GM10248 (cell line): ENCODE measurements at regions of chr17 and their contacts with region 1.

Region 1: DNA sequence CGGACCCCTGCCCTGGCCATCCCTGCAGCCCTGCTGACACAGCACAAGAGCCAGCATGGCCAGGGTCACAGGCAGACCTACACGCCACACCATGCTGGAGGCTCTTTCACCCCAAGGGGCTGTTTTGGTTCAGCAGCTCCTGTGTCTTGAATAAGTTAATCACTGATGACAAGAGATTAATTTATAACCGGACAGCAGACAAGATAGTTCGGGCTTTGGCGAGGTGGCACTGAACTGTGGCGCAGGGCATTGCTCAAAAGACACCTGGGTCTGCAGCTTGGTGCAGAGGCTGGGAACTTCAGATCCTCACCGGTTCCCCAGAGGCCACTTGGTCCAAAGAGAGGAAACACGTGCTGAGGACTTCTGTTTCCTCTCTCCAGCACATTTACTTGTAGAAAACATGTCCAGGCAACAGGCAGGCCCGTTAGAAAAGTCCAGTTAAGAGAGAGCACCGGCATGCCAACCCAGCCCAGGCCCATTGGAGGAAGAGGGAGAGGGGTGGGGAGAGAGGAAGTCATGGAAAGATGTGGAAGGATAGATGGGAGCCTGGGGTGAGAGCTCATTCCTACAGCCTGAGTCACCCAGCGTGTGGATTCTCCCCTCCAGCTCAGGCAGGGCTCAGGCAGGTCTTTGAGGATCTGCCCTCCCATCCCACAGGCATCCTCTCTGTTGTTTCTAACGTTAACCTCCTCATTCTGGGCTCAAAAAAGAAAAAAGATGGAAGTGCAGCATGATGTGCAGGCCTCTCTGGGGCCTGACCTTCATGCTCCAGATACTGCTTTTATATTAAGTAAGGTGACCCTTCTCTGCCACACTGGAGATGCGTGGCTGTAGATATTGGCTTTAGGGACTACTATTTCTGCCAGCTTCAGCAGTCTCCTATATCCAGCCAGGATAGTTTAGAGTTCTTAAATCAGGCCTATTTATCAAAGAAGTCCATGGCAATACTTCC is 80.0 kb upstream of the HNF1B start:
- DNase-seq: no peak
- CTCF ChIP-seq: no peak

Region 2: DNA sequence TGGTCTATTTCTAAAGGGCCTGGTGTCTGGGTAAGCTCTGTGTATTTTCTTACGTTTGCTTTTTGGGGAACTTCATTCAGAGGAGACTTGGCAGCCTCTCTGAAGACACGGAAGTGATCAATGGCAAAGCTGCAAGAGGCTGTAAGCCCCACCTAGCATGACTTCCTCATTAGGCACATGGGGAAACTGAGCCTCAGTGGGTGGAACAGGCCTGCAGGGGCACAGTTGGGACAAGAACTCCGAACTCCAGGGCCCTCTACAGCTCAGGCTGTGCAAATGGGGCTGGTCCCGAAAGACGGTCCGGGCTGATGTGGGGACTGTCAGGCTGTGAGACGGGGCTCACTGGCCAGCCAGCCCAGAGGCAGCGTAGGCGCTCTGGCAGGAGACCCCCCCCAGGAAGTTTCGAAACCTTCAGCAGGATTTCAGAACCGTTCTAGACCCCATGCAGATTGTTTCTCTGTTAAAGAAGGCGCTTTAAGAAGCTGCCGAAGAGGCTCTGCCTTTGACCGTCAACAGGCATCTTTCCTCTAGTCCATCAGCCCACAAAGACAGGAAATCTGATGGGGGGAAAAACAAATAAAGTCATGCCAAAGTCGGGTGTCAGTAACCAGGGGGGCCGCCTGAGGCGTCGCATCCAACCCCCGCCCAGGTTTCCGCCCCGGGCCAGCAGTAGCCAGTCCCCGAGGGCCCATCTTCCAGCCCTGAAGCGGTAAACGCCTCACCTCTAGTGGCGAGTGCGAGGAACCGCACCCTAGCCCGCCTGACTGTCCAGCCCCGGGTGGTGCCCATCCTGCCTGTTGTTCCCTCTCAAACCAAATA is 19.6 kb after region 1 on chr17:
- CTCF ChIA-PET with region 1: interaction called, 10 read pairs
- POLR2A ChIA-PET with region 1: no interaction called
- DNase-seq: peak; percentile 85
- CTCF ChIP-seq: peak; percentile 93